ENCODE measurements at regions of chr2 and their contacts with region 1.

Region 1: GRCh38 chr2:229586746-229587705 is 127.3 kb downstream of the DNER start:
- DNase-seq: peak; percentile 24
- H3K4me3 ChIP-seq: no peak overlapping the region; the same call in 1 of the 2 replicates
- H3K27ac ChIP-seq: no peak overlapping the region
- H3K27me3 ChIP-seq: no peaks in the 10 kb centered on the region
- CTCF ChIP-seq: peak; percentile 90

Region 2: GRCh38 chr2:228681426-228681825 is 905.6 kb before region 1 on chr2:
- CTCF ChIA-PET with region 1: interaction called, 10 read pairs
- POLR2A ChIA-PET with region 1: no interaction called
- DNase-seq: no peak
- H3K4me3 ChIP-seq: no peak overlapping the region
- H3K27ac ChIP-seq: no peak overlapping the region
- H3K27me3 ChIP-seq: no peaks in the 10 kb centered on the region
- CTCF ChIP-seq: peak; percentile 59

Region 3: DNA sequence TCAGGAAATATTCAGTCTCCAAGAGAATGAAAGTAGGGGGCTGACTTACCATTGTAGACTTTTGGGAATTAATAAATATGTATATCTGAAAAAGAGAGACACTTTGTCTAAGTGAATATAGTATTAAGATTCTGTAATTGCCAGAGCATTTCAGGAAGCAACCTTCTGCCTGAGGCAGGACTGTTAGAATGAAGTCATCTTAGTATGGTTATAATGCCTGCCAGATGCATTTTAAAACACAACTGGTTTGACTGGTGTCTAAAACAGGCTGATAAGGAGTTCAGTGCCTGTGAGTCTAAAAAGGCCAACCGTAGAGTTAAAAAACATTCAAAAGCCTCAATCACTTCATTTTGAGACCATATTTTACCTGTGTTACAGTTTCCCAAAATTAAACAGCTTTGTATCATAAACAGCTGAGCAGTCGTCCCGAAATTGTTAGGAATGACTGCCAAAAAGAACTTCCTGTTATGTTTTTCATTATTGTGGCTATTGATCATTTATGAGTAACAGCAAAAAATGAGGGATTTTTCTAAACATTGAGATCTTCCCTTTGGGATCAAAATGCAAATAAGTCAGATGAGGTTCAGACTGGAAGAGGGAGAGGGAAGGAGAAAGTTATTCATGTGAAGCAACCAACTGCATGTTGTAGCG is 759.9 kb before region 1 on chr2:
- CTCF ChIA-PET with region 1: interaction called, 12 read pairs
- POLR2A ChIA-PET with region 1: no interaction called
- DNase-seq: no peak
- H3K4me3 ChIP-seq: no peak overlapping the region
- H3K27ac ChIP-seq: no peak overlapping the region
- H3K27me3 ChIP-seq: no peaks in the 10 kb centered on the region
- CTCF ChIP-seq: no peak

Region 4: GRCh38 chr2:229342376-229342775 is 244.7 kb before region 1 on chr2:
- CTCF ChIA-PET with region 1: interaction called, 12 read pairs
- POLR2A ChIA-PET with region 1: no interaction called
- DNase-seq: no peak
- H3K4me3 ChIP-seq: no peak overlapping the region
- H3K27ac ChIP-seq: no peak overlapping the region
- H3K27me3 ChIP-seq: no peaks in the 10 kb centered on the region
- CTCF ChIP-seq: peak; percentile 52

Region 5: DNA sequence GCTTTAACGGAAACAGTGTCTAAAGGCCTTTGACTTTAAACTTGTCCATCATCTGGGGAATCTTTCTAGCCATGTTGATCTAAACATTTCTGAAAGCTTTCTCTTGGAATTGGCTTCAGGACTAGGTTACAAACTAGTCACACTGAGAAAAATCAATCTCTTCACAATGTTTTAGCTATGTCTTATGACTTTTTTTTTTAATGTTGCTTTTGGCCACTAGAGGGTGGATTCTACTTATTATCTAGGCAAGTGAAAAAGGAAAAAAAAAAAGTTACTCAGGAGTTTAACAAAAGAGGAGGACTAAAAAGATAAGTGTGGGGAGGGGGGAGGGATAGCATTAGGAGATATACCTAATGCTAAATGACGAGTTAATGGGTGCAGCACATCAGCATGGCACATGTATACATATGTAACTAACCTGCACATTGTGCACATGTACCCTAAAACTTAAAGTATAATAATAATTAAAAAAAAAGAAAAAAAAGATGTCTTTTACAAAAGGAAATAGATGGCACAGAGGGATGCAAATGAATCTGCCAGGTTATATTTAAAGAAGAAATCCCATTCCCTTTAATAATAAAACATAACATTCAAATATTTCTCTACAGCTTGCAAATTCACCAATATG is 155.6 kb before region 1 on chr2:
- CTCF ChIA-PET with region 1: interaction called, 80 read pairs
- POLR2A ChIA-PET with region 1: interaction called, 6 read pairs
- DNase-seq: no peak
- H3K4me3 ChIP-seq: no peak overlapping the region
- H3K27ac ChIP-seq: no peak overlapping the region
- H3K27me3 ChIP-seq: no peaks in the 10 kb centered on the region
- CTCF ChIP-seq: peak; percentile 63

Measured in AG04450 (cell line).